ENCODE measurements at regions of chr4 and their contacts with region 1.

Region 1: GRCh38 chr4:25654971-25655963 is at the start of gene SLC34A2:
- DNase-seq: peak; percentile 34
- total RNA-seq, gene SLC34A2: 0.19 TPM in 1 of 2 donors, not detected in the other

Region 2: DNA sequence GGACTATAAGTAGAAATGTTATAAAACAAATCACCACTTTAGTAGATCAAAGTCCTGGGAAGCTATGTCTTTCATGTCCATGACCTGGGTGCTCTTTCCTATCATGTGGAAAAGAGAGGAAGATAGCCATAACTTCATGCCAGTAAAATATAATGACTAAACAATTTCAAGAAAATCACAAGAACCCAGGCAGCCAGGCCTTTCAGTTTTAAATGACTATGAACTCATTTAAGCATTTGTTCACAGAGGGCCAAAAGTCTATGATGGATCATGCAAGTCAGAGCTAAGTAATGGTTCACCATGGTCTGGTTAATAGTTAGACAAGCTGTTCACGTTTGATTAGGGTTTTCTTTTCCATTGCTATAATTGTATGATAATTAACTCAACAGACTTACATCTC is 1921.3 kb before region 1 on chr4:
- intact Hi-C with region 1: loop called in 1 of 2 experiments (anchors 5 kb)
- DNase-seq: no peak